A549 (cell line): ENCODE measurements at regions of chrX and their contacts with region 1.

Region 1: GRCh38 chrX:45479835-45480422 is 279.3 kb upstream of the DIPK2B start:
- DNase-seq: peak; percentile 55 to 96
- ATAC-seq: peak; percentile 95 to 96
- H3K4me3 ChIP-seq: no peak overlapping the region
- H3K27ac ChIP-seq: peak overlapping the region; percentile 74 to 93
- H3K4me1 ChIP-seq: peaks cover 19% of the 10 kb centered on the region
- CTCF ChIP-seq: no peak
- EP300 ChIP-seq: peak; percentile 92 to 97
- POLR2A ChIP-seq: no peak
- RAD21 ChIP-seq: peak; percentile 17 to 52; a peak in 4 of 5 replicates

Region 2: DNA sequence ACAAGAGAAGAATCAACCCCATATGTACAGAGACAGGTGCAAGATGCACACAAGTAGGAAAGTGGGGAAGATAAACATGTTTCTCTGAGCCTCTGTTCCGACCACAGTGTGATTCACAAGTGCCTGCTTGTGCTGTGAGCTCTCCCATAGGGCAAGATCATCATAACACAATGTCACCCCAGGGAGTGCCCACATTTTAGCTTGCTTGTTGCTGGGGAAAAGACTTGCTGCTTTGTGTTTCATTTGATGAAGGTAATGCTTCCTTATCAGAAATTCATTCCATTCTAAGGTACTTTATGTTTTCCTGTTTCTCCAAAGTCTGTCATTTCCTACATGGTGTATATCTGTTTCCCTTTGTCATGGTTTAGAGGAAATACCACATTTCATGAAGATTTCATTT is 25.3 kb after region 1 on chrX:
- CTCF ChIA-PET with region 1: interaction called, 4 read pairs
- POLR2A ChIA-PET with region 1: interaction called, 13 read pairs
- DNase-seq: peak in 1 of 2 experiments; percentile 31
- ATAC-seq: no peak
- H3K4me3 ChIP-seq: no peak overlapping the region
- H3K27ac ChIP-seq: peak overlapping the region; percentile 74 to 88; a peak in 5 of 6 replicates
- H3K4me1 ChIP-seq: peaks cover 33% of the 10 kb centered on the region
- CTCF ChIP-seq: no peak
- EP300 ChIP-seq: no peak
- POLR2A ChIP-seq: no peak
- RAD21 ChIP-seq: no peak